Right ventricle myocardium superior (tissue), 1 donor: ENCODE measurements at regions of chr6 and their contacts with region 1.

Region 1: GRCh38 chr6:29976588-29977424 is 34.5 kb downstream of the HLA-A start:
- DNase-seq: peak; percentile 94
- ATAC-seq: peak; percentile 98

Region 2: DNA sequence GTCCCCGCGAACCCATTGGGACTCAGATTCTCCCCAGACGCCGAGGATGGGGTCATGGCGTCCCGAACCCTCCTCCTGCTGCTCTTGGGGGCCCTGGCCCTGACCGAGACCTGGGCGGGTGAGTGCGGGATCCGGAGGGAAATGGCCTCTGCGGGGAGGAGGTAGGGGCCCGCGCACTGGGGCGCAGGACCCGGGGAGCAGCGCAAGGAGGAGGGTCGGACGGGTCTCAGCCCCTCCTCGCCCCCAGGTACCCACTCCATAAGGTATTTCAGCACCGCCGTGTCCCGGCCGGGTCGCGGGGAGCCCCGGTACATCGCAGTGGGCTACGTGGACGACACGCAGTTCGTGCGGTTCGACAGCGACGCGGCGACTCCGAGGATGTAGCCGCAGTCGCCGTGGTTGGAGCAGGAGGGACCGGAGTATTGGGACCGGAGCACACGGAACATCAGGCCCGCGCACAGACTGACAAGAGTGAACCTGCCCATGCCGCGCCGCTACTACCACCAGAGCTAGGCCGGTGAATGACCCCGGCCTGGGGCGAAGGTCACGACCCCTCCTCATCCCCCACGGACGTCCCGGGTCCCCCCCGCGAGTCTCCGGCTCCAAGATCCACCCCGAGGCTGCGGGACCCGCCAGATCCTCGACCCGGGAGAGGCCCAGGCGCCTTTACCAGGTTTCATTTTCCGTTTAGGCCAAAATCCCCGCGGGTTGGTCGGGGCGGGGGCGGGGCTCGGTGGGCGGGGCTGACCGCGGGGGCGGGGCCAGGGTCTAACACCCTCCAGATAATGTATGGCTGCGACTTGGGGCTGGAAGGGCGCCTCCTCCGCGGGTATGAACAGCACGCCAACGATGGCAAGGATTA is 50.2 kb before region 1 on chr6:
- intact Hi-C with region 1: loop called (anchors 10 kb)
- DNase-seq: peak; percentile 88
- ATAC-seq: peak; percentile 93